ENCODE measurements at regions of chr15 and their contacts with region 1.

Region 1: GRCh38 chr15:75517233-75517632 is 61.9 kb downstream of the PTPN9 start:
- DNase-seq: no peak
- H3K4me3 ChIP-seq: no peak overlapping the region
- H3K27ac ChIP-seq: peak overlapping the region in 1 of 2 donors; percentile 41
- H3K4me1 ChIP-seq: no peaks in the 10 kb centered on the region
- H3K27me3 ChIP-seq: no peaks in the 10 kb centered on the region
- CTCF ChIP-seq: no peak

Region 2: DNA sequence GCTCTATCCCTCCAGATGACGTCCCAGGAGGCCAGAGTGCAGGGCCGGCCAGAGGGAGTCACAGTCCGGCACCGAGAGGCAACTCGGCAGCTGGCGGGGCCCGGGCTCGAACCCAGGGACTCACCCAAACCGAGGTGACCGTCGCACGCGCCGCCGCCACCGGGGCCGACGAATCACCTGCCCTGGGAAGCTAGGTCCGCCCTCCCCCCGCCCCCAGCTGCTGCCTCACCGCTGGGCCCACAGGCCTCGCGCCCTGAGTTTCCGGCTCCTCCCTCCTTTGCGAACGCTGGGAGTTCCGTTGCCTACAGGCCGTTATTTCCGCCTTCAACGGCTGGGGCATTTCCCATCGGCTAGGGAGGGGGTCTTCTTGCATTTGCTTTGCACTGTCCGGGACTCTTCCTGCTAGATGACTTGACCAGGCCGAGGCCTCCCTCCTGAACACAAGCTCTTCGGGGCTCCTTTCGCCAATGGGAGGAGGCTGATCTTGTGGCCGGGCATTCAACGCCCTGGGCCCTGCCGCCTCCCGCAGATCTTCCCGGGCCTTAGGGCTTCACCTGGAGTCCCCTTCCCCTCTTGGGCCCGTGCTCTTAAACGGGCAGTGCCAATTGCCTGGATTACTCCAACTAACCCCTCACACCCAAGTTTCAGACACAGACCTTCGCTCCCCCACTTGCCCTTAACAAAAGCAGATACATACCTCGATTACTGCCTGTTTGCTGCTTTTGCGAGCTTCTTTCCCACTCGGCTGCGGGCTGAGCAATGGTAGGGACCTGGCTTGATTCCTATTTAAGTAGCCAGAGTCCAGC is 108.5 kb after region 1 on chr15 and contains the start of gene SNUPN:
- intact Hi-C with region 1: loop called (anchors 10 kb)
- DNase-seq: peak; percentile 94 to 97
- H3K4me3 ChIP-seq: peak within 1 kb of the TSS; percentile 94 to 99
- H3K27ac ChIP-seq: peak within 1 kb of the TSS; percentile 93 to 97
- H3K4me1 ChIP-seq: peaks cover 0 to 28% (median 12%) of the 10 kb centered on the region in 4 donors
- H3K27me3 ChIP-seq: no peaks in the 10 kb centered on the region
- CTCF ChIP-seq: no peak